PC-9 (cell line): ENCODE measurements at regions of chr9 and their contacts with region 1.

Region 1: DNA sequence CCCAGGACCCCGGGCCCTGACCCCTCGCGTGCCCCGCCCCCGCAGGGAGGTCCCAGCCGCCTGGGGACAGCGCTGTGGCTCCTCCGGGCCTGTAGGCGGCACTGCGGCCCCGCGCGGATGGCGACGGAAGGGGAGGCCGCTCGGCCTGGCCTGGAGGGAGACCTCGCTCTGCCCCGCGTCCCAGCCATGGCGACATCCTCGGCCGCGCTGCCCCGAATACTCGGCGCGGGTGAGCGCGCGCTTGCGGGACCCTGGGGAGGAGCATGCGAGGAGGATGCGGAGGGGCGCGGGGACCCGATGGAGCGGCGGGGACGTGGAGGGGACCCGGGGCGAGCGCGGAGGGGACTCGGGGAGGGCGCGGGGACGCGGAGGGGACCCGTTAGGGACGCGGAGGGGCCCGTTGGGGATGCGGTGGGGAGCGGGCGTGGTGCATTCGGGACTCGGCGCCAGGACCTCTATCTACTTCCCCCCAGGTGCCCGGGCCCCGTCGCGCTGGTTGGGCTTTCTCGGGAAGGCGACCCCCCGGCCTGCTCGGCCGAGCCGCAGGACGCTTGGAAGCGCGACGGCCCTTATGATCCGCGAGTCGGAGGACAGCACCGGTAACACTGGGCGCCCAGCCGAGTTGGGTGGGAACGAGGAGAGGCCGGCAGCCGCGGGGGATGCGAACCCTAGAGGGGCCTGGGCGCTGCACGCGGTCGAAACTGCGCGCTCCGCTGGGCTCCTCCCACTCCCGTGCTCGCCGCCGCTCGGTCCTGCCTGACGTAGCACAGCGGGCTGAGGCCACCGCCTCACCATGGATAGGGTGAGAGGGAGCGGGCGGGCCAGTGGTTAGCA is at the start of gene MRPS2:
- DNase-seq: peak; percentile 76 to 95
- H3K4me3 ChIP-seq: peak within 1 kb of the TSS; percentile 63
- H3K27ac ChIP-seq: peak within 1 kb of the TSS; percentile 59
- H3K4me1 ChIP-seq: peaks cover 9% of the 10 kb centered on the region; the same call in 1 of the 2 replicates
- H3K27me3 ChIP-seq: no peaks in the 10 kb centered on the region
- CTCF ChIP-seq: peak; percentile 75
- total RNA-seq, gene MRPS2: 84.4 and 93.4 TPM in 2 replicates

Region 2: DNA sequence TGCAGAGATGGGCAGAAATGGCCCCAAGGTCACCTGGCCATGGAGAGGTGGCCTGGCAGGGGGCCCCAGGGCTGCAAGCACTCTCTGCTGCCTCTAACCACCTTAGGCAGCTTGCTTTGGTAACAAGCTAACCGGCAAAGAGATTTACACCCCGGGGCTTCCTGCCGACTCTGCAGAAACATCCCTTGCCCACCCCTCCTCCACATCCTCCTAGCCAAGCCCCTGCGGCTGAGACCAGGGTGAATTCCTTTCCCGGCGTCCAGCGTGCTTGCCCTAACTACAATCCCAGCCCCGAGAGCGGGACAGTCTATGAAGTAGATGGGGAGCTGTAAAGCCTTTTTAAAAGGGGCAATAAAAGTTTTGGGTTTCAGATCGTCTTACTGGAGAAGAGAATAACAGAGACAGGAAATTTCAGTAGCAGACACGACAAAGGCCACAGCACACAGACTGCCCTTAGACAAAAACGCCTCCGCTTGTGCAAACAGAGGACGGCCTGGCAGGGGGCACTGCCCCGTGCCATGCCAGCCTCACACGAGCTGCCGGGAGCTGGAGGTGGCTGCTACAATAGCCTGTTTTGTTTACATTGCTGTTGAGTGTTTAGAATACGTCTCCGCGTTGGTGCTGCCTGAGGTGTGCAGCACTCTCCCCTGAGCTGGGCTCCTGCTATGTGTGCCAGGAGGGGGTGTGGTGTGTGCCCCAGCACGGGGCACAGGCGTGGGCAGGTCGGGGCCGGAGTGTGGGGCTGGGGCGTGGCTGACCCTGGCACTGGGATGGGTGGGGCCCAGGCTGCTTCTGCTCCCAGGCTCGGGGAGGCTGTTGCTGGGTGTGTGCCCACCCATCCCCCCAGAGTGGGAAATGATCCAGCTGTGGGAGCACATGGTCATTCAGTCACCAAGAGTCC is 1991.3 kb before region 1 on chr9:
- CTCF ChIA-PET with region 1: no interaction called
- POLR2A ChIA-PET with region 1: interaction called, 10 read pairs
- intact Hi-C with region 1: no loop called
- DNase-seq: peak in 1 of 2 experiments; percentile 55
- H3K4me3 ChIP-seq: peak overlapping the region; percentile 13; the same call in 1 of the 2 replicates
- H3K27ac ChIP-seq: no peak overlapping the region
- H3K4me1 ChIP-seq: peaks cover 22% of the 10 kb centered on the region
- H3K27me3 ChIP-seq: peaks cover 33% of the 10 kb centered on the region
- CTCF ChIP-seq: no peak